Panc1 (cell line): ENCODE measurements at regions of chr1 and their contacts with region 1.

Region 1: GRCh38 chr1:27662707-27663393 is 9.1 kb downstream of the IFI6 start:
- DNase-seq: peak; percentile 79
- ATAC-seq: peak; percentile 78
- H3K4me3 ChIP-seq: no peak overlapping the region
- H3K27ac ChIP-seq: peak overlapping the region; percentile 42
- H3K4me1 ChIP-seq: peaks cover 18% of the 10 kb centered on the region
- H3K27me3 ChIP-seq: no peaks in the 10 kb centered on the region
- CTCF ChIP-seq: peak; percentile 93

Region 2: GRCh38 chr1:27392096-27392777 is 270.6 kb before region 1 on chr1 and contains the start of gene GPR3:
- CTCF ChIA-PET with region 1: no interaction called
- POLR2A ChIA-PET with region 1: no interaction called
- in situ Hi-C with region 1: no loop called
- intact Hi-C with region 1: loop called (anchors 10 kb)
- DNase-seq: no peak
- ATAC-seq: peak; percentile 96
- H3K4me3 ChIP-seq: peak within 1 kb of the TSS; percentile 65 to 71
- H3K27ac ChIP-seq: peak within 1 kb of the TSS; percentile 69
- H3K4me1 ChIP-seq: peaks cover 6% of the 10 kb centered on the region
- H3K27me3 ChIP-seq: no peaks in the 10 kb centered on the region
- CTCF ChIP-seq: peak; percentile 86
- total RNA-seq, gene GPR3: 0.95 TPM

Region 3: GRCh38 chr1:27713139-27713725 is 50.4 kb after region 1 on chr1:
- CTCF ChIA-PET with region 1: interaction called, 16 read pairs
- POLR2A ChIA-PET with region 1: no interaction called
- in situ Hi-C with region 1: no loop called
- intact Hi-C with region 1: no loop called
- DNase-seq: no peak
- ATAC-seq: no peak
- H3K4me3 ChIP-seq: no peak overlapping the region
- H3K27ac ChIP-seq: no peak overlapping the region
- H3K4me1 ChIP-seq: no peaks in the 10 kb centered on the region
- H3K27me3 ChIP-seq: peaks cover 3% of the 10 kb centered on the region; the same call in 1 of the 2 replicates
- CTCF ChIP-seq: no peak